HAP-1 (cell line): ENCODE measurements at regions of chr2 and their contacts with region 1.

Region 1: GRCh38 chr2:47323009-47323821 is 79.7 kb upstream of the MSH2 start:
- DNase-seq: peak; percentile 78 to 90
- H3K4me3 ChIP-seq: no peak overlapping the region
- H3K4me1 ChIP-seq: peaks cover 8% of the 10 kb centered on the region
- H3K27me3 ChIP-seq: no peaks in the 10 kb centered on the region

Region 2: GRCh38 chr2:46632349-46632748 is 690.9 kb before region 1 on chr2:
- in situ Hi-C with region 1: loop called (anchors 10 kb)
- DNase-seq: peak in 1 of 2 experiments; percentile 30
- H3K4me3 ChIP-seq: no peak overlapping the region
- H3K4me1 ChIP-seq: no peaks in the 10 kb centered on the region
- H3K27me3 ChIP-seq: no peaks in the 10 kb centered on the region

Region 3: GRCh38 chr2:46989491-46990230 is 333.6 kb before region 1 on chr2:
- in situ Hi-C with region 1: loop called (anchors 5 kb)
- DNase-seq: no peak
- H3K4me3 ChIP-seq: no peak overlapping the region
- H3K4me1 ChIP-seq: peaks cover 4% of the 10 kb centered on the region
- H3K27me3 ChIP-seq: no peaks in the 10 kb centered on the region

Region 4: DNA sequence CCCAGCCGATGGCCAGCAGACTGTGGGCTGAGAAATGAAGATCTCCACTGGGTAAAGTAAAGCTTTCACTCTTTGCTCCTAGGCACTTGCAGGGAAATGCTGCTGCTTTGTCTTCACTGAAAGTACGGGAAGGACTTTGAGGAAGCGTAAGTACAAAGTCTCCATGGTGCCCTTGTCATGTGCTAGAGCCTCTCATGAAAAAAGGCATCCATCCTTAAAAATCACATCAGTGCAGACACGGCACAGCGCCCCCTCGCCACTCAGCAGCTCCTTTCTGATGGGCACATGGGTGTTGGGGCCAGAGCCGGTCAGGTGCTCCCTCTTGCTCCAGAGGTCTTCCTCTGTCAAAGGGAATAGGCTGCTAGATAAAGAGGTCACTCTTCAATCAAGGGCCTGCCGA is 59.1 kb before region 1 on chr2:
- in situ Hi-C with region 1: no loop called
- DNase-seq: no peak
- H3K4me3 ChIP-seq: no peak overlapping the region
- H3K4me1 ChIP-seq: peaks cover 22% of the 10 kb centered on the region
- H3K27me3 ChIP-seq: no peaks in the 10 kb centered on the region